ENCODE measurements at regions of chr3 and their contacts with region 1.

Region 1: DNA sequence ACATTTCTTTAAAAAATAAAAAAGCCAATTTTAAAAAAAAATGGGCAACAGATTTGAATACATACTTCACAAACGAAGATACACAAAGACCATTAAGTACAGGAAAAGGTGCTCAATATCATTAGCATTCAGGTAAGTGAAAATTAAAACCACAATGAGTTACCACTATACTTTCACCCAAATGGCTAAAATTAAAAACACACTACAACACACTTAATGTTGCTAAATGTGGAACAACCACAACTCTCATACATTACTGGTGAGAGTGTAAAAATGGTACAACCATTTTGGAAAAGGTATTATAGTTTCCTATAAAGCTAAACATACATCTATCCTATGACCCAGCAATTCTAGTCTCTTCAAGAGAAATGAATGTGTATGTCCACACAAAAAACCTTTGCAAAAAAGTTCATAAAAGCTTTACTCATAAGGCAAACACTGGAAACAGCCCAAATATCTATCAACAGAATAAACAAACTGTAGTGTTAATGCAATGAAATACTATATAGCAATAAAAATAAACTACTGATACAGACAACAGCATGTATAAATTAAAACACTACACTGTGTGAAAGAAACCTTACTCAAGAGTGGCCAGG is 14.9 kb downstream of the IP6K1 start:
- DNase-seq: no peak
- ATAC-seq: no peak
- H3K4me3 ChIP-seq: no peak overlapping the region
- H3K27ac ChIP-seq: no peak overlapping the region
- H3K4me1 ChIP-seq: no peaks in the 10 kb centered on the region; the same call in 1 of the 2 replicates
- H3K27me3 ChIP-seq: no peaks in the 10 kb centered on the region
- CTCF ChIP-seq: no peak

Region 2: GRCh38 chr3:49689046-49689907 is 82.2 kb before region 1 on chr3 and contains the starts of genes MST1 and RNF123:
- CTCF ChIA-PET with region 1: no interaction called
- POLR2A ChIA-PET with region 1: no interaction called
- in situ Hi-C with region 1: no loop called
- intact Hi-C with region 1: no loop called
- DNase-seq: no peak
- ATAC-seq: peak; percentile 60
- H3K4me3 ChIP-seq: peak within 1 kb of the TSS; percentile 82 to 84
- H3K27ac ChIP-seq: peak within 1 kb of the TSS; percentile 94
- H3K4me1 ChIP-seq: no peaks in the 10 kb centered on the region
- H3K27me3 ChIP-seq: no peaks in the 10 kb centered on the region
- CTCF ChIP-seq: no peak; the same call in 1 of the 2 replicates
- total RNA-seq, gene MST1: 14.0 TPM
- total RNA-seq, gene RNF123: 23.1 TPM

Region 3: DNA sequence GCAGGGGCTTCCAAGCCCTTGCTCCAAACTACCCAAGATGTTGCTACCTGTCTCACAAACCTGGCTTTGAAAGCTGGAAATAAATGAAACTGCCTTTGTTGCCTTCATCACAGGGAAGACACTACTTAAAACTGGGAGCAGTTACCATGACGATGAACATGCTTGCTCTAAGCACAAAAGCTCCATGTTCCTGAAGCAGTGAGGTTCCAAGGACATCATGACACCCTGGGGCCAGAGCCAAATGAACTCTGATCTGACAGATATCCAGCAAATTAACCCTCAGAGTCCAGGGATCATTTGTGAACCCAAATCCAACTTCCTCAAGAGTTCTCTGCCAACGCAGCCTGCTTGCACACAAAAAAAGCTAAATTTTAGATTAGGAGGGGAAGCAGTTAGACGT is 74.3 kb after region 1 on chr3:
- CTCF ChIA-PET with region 1: no interaction called
- POLR2A ChIA-PET with region 1: interaction called, 12 read pairs
- in situ Hi-C with region 1: no loop called
- intact Hi-C with region 1: no loop called
- DNase-seq: no peak
- ATAC-seq: no peak
- H3K4me3 ChIP-seq: no peak overlapping the region
- H3K27ac ChIP-seq: no peak overlapping the region
- H3K4me1 ChIP-seq: no peaks in the 10 kb centered on the region
- H3K27me3 ChIP-seq: no peaks in the 10 kb centered on the region
- CTCF ChIP-seq: no peak

Region 4: DNA sequence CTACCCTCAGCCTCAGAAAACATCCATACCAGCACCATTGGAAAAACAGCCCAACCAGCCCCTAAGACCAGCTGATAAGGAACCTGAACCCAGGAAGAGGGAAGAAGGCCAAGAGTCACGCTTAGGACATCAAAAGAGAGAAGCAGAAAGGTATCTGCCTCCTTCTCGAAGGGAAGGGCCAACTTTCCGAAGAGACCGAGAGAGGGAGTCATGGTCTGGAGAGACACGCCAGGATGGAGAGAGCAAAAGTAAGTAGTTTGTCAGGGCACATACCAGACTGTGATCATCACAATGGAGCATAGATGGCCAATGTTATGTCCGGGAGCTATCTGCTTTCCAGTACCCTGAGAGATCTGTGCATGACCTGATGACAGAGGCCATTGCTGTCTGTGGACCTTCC is 286.3 kb after region 1 on chr3:
- CTCF ChIA-PET with region 1: no interaction called
- POLR2A ChIA-PET with region 1: no interaction called
- in situ Hi-C with region 1: no loop called
- intact Hi-C with region 1: no loop called
- DNase-seq: no peak
- ATAC-seq: no peak
- H3K4me3 ChIP-seq: no peak overlapping the region
- H3K27ac ChIP-seq: no peak overlapping the region
- H3K4me1 ChIP-seq: no peaks in the 10 kb centered on the region
- H3K27me3 ChIP-seq: no peaks in the 10 kb centered on the region
- CTCF ChIP-seq: no peak